ENCODE measurements at regions of chr9 and their contacts with region 1.

Region 1: DNA sequence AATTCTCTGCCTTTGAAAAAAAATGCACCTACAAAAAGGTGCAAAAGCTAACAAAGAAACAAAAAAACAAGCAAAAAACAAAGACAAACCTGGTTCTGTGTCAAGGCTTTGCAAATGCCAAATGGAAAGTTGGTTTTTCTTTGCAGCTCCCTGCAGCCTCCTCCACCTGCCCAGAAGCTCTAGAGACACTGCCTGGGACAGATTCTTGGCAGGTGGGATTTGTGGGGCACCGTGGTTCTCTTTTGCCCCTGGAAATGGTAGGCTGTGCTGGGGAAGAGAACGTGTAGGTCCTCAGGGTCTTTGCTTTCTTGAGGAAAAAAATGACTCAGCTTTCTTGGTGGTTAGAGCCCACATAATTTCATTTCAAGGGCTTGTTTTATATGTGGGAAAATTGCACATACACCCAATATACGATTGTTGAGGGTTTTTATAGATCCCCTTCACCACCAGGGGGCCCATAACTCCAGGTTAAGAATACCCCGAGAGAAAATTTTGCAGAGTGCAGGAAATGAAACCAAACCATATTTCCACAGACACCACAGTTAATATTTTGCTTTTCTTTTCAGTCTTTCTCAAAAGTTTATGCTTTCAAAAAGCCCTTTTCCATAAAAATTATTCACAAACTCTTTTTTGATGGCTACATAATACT is 58.7 kb downstream of the NXNL2 start:
- H3K4me3 Mint-ChIP-seq: no peak overlapping the region
- H3K27ac Mint-ChIP-seq: no peak overlapping the region
- H3K4me1 Mint-ChIP-seq: peaks cover 6% of the 10 kb centered on the region
- H3K27me3 Mint-ChIP-seq: peaks cover 8% of the 10 kb centered on the region

Region 2: DNA sequence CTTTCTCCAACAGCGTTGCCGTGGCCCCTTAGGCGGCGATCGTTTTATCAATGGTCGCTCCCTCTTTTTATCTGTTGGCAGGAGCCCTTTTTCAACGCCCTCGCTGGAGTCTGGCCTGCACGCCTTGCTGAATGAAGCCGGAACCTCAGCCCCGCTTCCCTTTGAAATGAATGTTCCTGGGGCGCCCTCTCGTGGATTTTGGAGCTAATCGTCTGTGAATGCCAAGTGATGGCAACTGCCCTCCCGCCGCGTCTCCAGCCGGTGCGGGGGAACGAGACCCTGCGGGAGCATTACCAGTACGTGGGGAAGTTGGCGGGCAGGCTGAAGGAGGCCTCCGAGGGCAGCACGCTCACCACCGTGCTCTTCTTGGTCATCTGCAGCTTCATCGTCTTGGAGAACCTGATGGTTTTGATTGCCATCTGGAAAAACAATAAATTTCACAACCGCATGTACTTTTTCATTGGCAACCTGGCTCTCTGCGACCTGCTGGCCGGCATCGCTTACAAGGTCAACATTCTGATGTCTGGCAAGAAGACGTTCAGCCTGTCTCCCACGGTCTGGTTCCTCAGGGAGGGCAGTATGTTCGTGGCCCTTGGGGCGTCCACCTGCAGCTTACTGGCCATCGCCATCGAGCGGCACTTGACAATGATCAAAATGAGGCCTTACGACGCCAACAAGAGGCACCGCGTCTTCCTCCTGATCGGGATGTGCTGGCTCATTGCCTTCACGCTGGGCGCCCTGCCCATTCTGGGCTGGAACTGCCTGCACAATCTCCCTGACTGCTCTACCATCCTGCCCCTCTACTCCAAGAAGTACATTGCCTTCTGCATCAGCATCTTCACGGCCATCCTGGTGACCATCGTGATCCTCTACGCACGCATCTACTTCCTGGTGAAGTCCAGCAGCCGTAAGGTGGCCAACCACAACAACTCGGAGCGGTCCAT is 407.6 kb after region 1 on chr9:
- intact Hi-C with region 1: loop called (anchors 1 kb)
- H3K4me3 Mint-ChIP-seq: no peak overlapping the region
- H3K27ac Mint-ChIP-seq: no peak overlapping the region
- H3K4me1 Mint-ChIP-seq: peaks cover 14% of the 10 kb centered on the region
- H3K27me3 Mint-ChIP-seq: no peaks in the 10 kb centered on the region

Region 3: DNA sequence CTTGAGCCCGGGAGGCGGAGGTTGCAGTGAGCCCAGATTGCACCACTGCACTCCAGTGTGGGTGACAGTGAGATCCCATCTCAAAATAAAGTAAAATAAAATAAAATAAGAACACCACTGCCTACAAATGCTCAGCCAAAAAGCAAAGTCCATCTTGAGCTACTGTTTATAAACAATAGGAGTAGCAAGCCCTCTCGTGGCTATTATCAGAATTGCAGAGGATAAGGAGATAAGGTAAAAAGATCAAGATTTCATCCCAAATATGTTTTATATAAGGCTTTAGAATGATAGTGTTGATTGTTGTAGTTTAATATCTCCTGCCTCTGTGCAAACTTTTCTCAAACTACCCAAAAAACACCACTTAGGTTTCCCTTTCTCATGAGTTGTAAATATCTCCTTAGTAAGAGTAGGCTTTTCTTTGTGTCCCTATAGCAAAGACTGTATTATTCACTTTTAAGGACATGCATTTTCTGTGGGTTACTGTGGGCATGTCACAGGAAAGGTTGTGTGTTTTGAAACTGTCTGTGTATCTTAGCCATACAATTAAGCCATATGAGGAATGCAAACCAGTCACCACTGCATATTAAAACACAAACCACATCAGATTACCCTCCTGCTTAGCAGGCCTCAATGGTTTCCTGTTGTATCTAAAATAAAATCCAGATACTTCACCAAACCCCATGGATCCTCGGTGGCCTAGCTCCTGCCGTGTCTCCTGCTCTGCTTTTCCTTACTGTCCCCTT is 685.5 kb after region 1 on chr9:
- intact Hi-C with region 1: loop called (anchors 2 kb)
- H3K4me3 Mint-ChIP-seq: no peak overlapping the region
- H3K27ac Mint-ChIP-seq: no peak overlapping the region
- H3K4me1 Mint-ChIP-seq: no peaks in the 10 kb centered on the region
- H3K27me3 Mint-ChIP-seq: peaks cover 6% of the 10 kb centered on the region

Measured in dendritic cell treated with granulocyte-macrophage colony-stimulating factor and Interleukin-4, amounts not matched to agents 40 ng/mL and 50 ng/mL, for 4 days (primary cell).